ENCODE measurements at regions of chr6 and their contacts with region 1.

Region 1: GRCh38 chr6:4055420-4056041 is 23.4 kb downstream of the FAM217A start:
- DNase-seq: no peak
- H3K4me3 ChIP-seq: no peak overlapping the region
- H3K27ac ChIP-seq: peak overlapping the region; percentile 17
- H3K4me1 ChIP-seq: peaks cover 13% of the 10 kb centered on the region
- H3K27me3 ChIP-seq: no peaks in the 10 kb centered on the region
- CTCF ChIP-seq: peak; percentile 63

Region 2: DNA sequence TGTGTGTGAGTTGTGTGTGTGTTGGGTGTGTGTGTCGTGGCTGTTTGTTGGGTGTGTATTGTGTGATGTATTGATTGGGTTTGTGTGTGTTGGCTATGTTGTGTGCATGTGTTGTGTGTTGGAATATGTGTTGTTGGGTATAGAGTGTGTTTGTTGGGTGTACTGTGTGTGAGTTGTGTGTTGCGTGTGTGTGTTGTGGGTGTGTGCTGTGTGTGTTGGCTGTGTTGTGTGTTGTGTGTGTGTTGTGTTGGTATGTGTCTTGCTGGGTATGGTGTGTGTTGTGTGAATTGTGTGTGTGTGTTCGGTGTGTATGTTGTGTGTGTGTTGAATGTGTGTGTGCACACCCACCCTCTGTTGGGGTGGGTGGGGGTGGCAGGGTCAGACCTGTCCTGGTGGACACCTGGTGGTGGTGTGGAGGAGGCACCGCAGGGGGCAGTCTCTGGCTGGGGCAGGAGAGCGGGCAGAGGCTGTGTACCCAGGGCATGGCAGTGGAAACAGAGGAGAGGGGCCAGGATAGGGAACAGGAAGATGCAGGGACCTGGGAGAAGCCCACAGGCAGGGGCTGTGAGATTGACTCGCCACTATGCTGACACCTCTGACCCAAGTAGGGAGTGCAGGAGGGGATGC is 278.5 kb before region 1 on chr6:
- intact Hi-C with region 1: no loop called
- DNase-seq: no peak
- H3K4me3 ChIP-seq: no peak overlapping the region
- H3K27ac ChIP-seq: no peak overlapping the region
- H3K4me1 ChIP-seq: peaks cover 8% of the 10 kb centered on the region
- H3K27me3 ChIP-seq: no peaks in the 10 kb centered on the region
- CTCF ChIP-seq: no peak

Region 3: GRCh38 chr6:3813150-3813780 is 242.3 kb before region 1 on chr6:
- intact Hi-C with region 1: no loop called
- DNase-seq: peak; percentile 64
- H3K4me3 ChIP-seq: peak overlapping the region; percentile 5
- H3K27ac ChIP-seq: peak overlapping the region; percentile 37
- H3K4me1 ChIP-seq: peaks cover 30% of the 10 kb centered on the region
- H3K27me3 ChIP-seq: no peaks in the 10 kb centered on the region
- CTCF ChIP-seq: no peak

Region 4: DNA sequence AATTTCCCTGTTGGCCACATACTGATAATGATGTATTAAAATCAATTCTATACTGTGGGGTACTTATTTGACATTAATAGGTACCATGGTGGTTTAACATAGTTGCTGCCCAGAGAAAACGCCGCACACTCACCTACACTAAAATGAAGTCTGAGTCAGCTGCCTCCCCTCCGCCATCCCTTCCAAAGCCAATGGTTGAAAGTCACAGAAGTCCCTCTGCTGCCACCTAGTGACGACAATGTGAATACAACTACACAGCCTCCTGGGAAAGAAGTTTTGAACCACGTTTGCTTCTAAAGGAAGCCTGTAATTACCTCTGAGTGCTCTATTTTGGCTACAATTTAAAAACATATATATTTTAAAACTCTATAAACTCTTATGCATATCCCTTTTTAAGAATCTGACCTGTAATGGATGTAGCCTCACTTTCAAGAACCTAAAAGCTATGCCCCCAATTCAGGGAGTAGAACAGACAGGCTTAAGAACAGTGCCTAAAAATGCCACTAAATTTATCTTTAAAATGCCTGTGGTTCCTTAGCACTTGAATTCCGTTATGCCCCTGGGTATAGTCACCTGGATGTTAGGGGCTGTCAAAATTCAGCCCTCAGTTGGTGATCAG is 100.4 kb after region 1 on chr6:
- intact Hi-C with region 1: loop called (anchors 10 kb)
- DNase-seq: peak; percentile 41
- H3K4me3 ChIP-seq: no peak overlapping the region
- H3K27ac ChIP-seq: no peak overlapping the region
- H3K4me1 ChIP-seq: no peaks in the 10 kb centered on the region
- H3K27me3 ChIP-seq: no peaks in the 10 kb centered on the region
- CTCF ChIP-seq: peak; percentile 92

Region 5: GRCh38 chr6:4209196-4209595 is 153.7 kb after region 1 on chr6:
- intact Hi-C with region 1: loop called (anchors 5 kb)
- DNase-seq: no peak
- H3K4me3 ChIP-seq: no peak overlapping the region
- H3K27ac ChIP-seq: no peak overlapping the region
- H3K4me1 ChIP-seq: peaks cover 40% of the 10 kb centered on the region
- H3K27me3 ChIP-seq: no peaks in the 10 kb centered on the region
- CTCF ChIP-seq: no peak

Region 6: GRCh38 chr6:4299476-4299875 is 243.9 kb after region 1 on chr6:
- intact Hi-C with region 1: no loop called
- DNase-seq: no peak
- H3K4me3 ChIP-seq: no peak overlapping the region
- H3K27ac ChIP-seq: no peak overlapping the region
- H3K4me1 ChIP-seq: peaks cover 11% of the 10 kb centered on the region
- H3K27me3 ChIP-seq: no peaks in the 10 kb centered on the region
- CTCF ChIP-seq: no peak

Region 7: GRCh38 chr6:5072440-5072839 is 1016.9 kb after region 1 on chr6:
- intact Hi-C with region 1: no loop called
- DNase-seq: no peak
- H3K4me3 ChIP-seq: no peak overlapping the region
- H3K27ac ChIP-seq: no peak overlapping the region
- H3K4me1 ChIP-seq: no peaks in the 10 kb centered on the region
- H3K27me3 ChIP-seq: no peaks in the 10 kb centered on the region
- CTCF ChIP-seq: no peak

Measured in left ventricle myocardium inferior (tissue), 1 donor.